BJ (cell line): ENCODE measurements at regions of chr5 and their contacts with region 1.

Region 1: GRCh38 chr5:112757468-112758208 is 20.0 kb downstream of the APC start:
- DNase-seq: no peak
- H3K4me3 ChIP-seq: no peak overlapping the region
- H3K27me3 ChIP-seq: no peaks in the 10 kb centered on the region
- CTCF ChIP-seq: peak; percentile 70

Region 2: GRCh38 chr5:112551419-112552032 is 206.1 kb before region 1 on chr5:
- CTCF ChIA-PET with region 1: interaction called, 171 read pairs
- POLR2A ChIA-PET with region 1: interaction called, 3 read pairs
- DNase-seq: peak; percentile 14
- H3K4me3 ChIP-seq: no peak overlapping the region
- H3K27me3 ChIP-seq: 0 out of 2 replicates have a peak, but pooled peaks cover 2% of the 10 kb centered on the region
- CTCF ChIP-seq: peak; percentile 70

Region 3: DNA sequence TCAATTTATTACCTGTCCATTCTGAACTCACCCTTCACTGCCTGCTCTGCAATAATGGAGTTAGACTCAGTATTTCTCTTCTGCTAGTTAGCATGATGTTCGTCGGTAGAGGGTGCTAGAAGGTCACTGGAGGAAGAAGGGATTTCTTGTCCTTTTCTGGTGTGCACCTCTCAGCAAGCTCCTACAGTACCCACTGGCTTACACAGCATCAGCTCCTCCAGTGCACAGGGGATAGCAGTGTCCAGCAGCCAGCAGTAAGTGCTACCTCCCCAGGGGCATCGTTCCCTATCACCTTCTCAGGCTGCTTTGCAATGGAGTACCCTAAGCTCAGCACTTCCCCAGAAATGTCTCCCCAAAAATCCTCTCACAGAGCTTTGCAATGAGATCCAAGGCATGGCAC is 65.9 kb before region 1 on chr5:
- CTCF ChIA-PET with region 1: interaction called, 22 read pairs
- POLR2A ChIA-PET with region 1: no interaction called
- DNase-seq: no peak
- H3K4me3 ChIP-seq: no peak overlapping the region
- H3K27me3 ChIP-seq: no peaks in the 10 kb centered on the region; the same call in 1 of the 2 replicates
- CTCF ChIP-seq: peak; percentile 27; the same call in 1 of the 2 replicates

Region 4: GRCh38 chr5:112742424-112742823 is 15.2 kb before region 1 on chr5:
- CTCF ChIA-PET with region 1: interaction called, 25 read pairs
- POLR2A ChIA-PET with region 1: no interaction called
- DNase-seq: no peak
- H3K4me3 ChIP-seq: no peak overlapping the region
- H3K27me3 ChIP-seq: no peaks in the 10 kb centered on the region
- CTCF ChIP-seq: no peak

Region 5: DNA sequence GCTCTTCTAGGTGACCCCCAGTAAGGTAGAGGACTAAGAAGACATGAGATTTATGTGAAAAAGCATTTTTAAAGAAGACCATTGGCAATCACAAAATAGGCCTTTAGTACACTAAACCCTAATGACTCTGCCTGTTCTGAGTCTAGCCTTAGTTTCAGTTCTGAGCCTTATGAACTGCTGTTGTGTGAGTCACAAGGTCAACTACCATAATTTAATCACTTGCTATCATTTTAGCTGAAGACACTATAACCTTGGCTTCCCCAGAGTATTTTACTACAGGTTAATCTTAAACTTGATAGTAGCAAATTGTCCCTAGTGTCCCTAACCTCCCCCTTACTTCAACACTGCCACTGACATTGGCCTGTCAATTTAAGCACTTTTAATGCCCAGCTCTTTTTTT is 14.5 kb after region 1 on chr5:
- CTCF ChIA-PET with region 1: interaction called, 32 read pairs
- POLR2A ChIA-PET with region 1: no interaction called
- DNase-seq: no peak
- H3K4me3 ChIP-seq: no peak overlapping the region
- H3K27me3 ChIP-seq: no peaks in the 10 kb centered on the region
- CTCF ChIP-seq: no peak